Activated CD8-positive, alpha-beta T cell treated with anti-CD3 and anti-CD28 coated beads, Interleukin-2, amount 10 ng/mL, durations not matched to agents 7 days and 5 days (primary cell): ENCODE measurements at regions of chr15 and their contacts with region 1.

Region 1: GRCh38 chr15:74768771-74769342 is 13.0 kb upstream of the CSK start:
- DNase-seq: peak; percentile 76
- ATAC-seq: peak; percentile 48
- H3K4me3 Mint-ChIP-seq: no peak overlapping the region
- H3K27ac Mint-ChIP-seq: peak overlapping the region; percentile 27
- H3K4me1 Mint-ChIP-seq: peaks cover 27% of the 10 kb centered on the region
- H3K27me3 Mint-ChIP-seq: no peaks in the 10 kb centered on the region

Region 2: DNA sequence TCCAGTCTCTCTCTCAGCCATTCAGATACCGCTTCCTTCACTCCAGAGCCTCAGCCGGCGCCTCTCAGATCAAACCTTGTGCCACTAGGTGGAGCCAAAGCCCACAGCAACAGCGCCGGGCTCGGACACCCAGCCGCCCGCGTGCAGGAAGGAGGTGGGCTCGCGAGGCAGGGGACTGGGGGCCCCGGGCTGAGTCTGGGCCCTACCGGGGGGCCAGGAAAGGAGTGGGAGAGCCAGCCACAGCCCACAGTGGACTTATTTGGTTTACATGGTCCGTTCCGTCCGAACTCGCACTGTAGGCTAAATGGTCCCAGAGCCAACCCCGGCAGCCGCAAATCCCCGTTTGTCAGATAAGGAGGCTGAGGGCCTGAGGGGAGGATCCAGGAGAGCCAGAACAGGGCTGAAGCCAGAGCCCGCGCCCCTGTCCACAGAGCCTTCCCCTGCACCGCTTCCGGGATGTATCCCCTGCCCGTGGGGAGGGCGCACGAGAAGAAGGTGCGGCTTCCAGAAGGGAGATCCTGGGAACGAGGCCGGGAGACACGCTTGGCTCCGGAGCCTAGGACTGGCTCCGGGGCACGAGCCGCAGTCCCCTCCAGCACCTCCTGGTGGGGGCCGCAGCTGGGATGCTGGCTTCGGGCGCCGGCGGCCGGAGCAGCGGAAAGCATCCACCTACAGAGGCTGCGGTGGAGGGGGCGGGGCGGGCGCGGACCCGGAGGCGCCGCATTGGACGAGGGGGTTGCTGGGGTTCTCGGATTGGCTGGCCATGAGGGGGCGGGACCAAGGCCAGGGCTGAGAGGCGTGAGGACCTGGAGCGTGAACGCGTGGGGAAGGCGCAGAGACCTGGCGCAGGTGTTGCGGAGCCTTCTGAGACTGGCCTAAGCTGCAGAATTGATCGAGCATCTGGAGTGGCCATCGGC is 394.9 kb before region 1 on chr15:
- CTCF ChIA-PET with region 1: interaction called, 12 read pairs
- POLR2A ChIA-PET with region 1: no interaction called
- DNase-seq: peak; percentile 97
- ATAC-seq: peak; percentile 97
- H3K4me3 Mint-ChIP-seq: peak overlapping the region; percentile 77
- H3K27ac Mint-ChIP-seq: peak overlapping the region; percentile 75
- H3K4me1 Mint-ChIP-seq: peaks cover 25% of the 10 kb centered on the region
- H3K27me3 Mint-ChIP-seq: peaks cover 18% of the 10 kb centered on the region

Region 3: GRCh38 chr15:74620636-74621545 is 148.0 kb before region 1 on chr15:
- CTCF ChIA-PET with region 1: interaction called, 47 read pairs
- POLR2A ChIA-PET with region 1: interaction called, 4 read pairs
- DNase-seq: peak; percentile 87
- ATAC-seq: peak; percentile 84
- H3K4me3 Mint-ChIP-seq: no peak overlapping the region
- H3K27ac Mint-ChIP-seq: peak overlapping the region; percentile 35
- H3K4me1 Mint-ChIP-seq: peaks cover 49% of the 10 kb centered on the region
- H3K27me3 Mint-ChIP-seq: no peaks in the 10 kb centered on the region

Region 4: GRCh38 chr15:74635228-74635627 is 133.6 kb before region 1 on chr15:
- CTCF ChIA-PET with region 1: interaction called, 508 read pairs
- POLR2A ChIA-PET with region 1: interaction called, 8 read pairs
- DNase-seq: peak; percentile 83
- ATAC-seq: peak; percentile 87
- H3K4me3 Mint-ChIP-seq: no peak overlapping the region
- H3K27ac Mint-ChIP-seq: no peak overlapping the region
- H3K4me1 Mint-ChIP-seq: no peaks in the 10 kb centered on the region
- H3K27me3 Mint-ChIP-seq: no peaks in the 10 kb centered on the region

Region 5: GRCh38 chr15:74808073-74808755 is 39.4 kb after region 1 on chr15:
- CTCF ChIA-PET with region 1: interaction called, 12 read pairs
- POLR2A ChIA-PET with region 1: interaction called, 3 read pairs
- DNase-seq: no peak
- ATAC-seq: no peak
- H3K4me3 Mint-ChIP-seq: no peak overlapping the region
- H3K27ac Mint-ChIP-seq: peak overlapping the region; percentile 55
- H3K4me1 Mint-ChIP-seq: peaks cover 23% of the 10 kb centered on the region
- H3K27me3 Mint-ChIP-seq: peaks cover 7% of the 10 kb centered on the region

Region 6: DNA sequence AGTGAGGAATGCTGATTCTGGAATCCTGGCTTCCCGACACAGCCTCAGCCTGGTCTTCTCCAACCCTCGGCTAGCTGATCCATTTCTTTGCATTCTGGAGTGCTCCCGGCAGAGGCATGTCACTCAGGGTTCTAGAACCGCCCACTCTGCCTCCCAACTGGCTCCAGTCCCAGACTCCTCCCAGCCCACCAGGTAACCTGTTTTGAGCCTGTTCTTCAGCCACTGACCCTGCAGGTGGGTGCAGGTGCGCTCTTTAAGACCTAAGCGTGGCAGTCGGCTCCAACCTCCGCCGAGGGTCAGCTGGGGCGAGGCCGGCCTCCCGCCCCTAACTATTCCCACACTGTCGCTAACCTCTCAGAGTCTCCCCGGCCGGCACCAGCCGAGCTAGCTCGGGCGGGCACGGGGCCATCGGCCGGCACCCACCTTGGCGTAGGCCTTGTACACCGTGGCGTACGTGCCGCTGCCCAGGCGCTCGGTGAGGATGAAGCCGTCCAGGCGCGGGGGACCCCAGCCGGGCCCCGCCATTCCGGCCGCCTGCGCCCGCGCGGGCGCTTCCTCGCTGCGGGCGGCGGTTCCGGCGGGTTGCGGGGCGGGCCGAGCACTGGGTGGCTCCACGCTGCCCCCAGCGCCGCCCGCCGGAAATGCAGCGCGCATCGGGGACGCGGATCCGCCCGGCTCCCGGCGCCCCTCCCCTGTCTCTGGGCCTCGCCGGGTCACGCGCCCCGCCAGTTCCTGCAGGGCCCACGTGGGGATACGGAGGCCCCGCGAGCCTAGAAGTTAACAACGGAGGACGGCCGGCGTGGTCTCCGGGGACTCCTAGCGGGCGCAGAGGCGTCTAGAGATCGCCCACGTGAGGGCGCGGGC is 74.0 kb after region 1 on chr15 and contains the start of gene ULK3:
- CTCF ChIA-PET with region 1: interaction called, 15 read pairs
- POLR2A ChIA-PET with region 1: interaction called, 5 read pairs
- DNase-seq: peak; percentile 94
- ATAC-seq: peak; percentile 87
- H3K4me3 Mint-ChIP-seq: peak within 1 kb of the TSS; percentile 89
- H3K27ac Mint-ChIP-seq: peak within 1 kb of the TSS; percentile 93
- H3K4me1 Mint-ChIP-seq: peaks cover 49% of the 10 kb centered on the region
- H3K27me3 Mint-ChIP-seq: no peaks in the 10 kb centered on the region
- total RNA-seq, gene ULK3: 56.9 to 58.0 TPM

Region 7: GRCh38 chr15:74955796-74956647 is 187.2 kb after region 1 on chr15:
- CTCF ChIA-PET with region 1: interaction called, 95 read pairs
- POLR2A ChIA-PET with region 1: no interaction called
- DNase-seq: peak; percentile 71
- ATAC-seq: peak; percentile 51
- H3K4me3 Mint-ChIP-seq: peak overlapping the region; percentile 70
- H3K27ac Mint-ChIP-seq: no peak overlapping the region
- H3K4me1 Mint-ChIP-seq: peaks cover 45% of the 10 kb centered on the region
- H3K27me3 Mint-ChIP-seq: peaks cover 38% of the 10 kb centered on the region